Activated CD8-positive, alpha-beta T cell treated with anti-CD3 and anti-CD28 coated beads for 36 hours (primary cell): ENCODE measurements at regions of chr2 and their contacts with region 1.

Region 1: DNA sequence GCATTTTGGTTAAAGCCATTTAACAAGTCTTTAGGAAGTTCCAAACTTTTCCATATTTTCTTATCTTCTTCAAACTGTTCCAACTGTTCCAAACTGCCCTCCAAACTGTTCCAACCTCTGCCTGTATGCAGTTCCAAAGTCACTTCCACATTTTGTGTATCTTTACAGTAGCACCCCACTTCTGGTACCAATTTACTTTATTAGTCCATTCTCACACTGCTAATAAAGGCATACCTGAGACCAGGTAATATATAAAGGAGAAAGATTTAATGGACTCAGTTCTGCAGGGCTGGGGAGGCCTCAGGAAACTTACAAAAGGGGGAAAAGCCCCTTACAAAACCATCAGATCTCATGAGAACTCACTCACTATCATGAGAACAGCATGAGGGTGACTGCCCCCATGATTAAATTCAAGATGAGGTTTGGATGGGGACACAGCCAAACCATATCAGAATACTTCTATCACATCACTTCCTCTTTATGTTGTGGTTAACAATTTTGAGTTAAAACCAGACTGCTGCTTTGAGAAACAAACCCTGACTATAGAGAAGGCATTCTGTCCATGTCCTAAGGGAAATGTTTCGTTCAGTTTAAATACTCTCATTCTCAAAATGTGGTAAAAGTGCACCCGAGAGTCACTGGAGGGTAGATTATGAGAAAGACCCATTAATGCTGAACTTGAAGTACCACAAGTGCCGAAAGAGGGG is 11.0 kb downstream of the IL18R1 start:
- DNase-seq: peak; percentile 41
- ATAC-seq: peak; percentile 52
- H3K4me3 Mint-ChIP-seq: peak overlapping the region; percentile 51
- H3K27ac Mint-ChIP-seq: peak overlapping the region; percentile 96
- H3K4me1 Mint-ChIP-seq: peaks cover 88% of the 10 kb centered on the region
- H3K27me3 Mint-ChIP-seq: no peaks in the 10 kb centered on the region
- CTCF ChIP-seq: no peak

Region 2: GRCh38 chr2:102094917-102095316 is 271.6 kb before region 1 on chr2:
- CTCF ChIA-PET with region 1: no interaction called
- POLR2A ChIA-PET with region 1: no interaction called
- intact Hi-C with region 1: no loop called
- DNase-seq: peak; percentile 76
- ATAC-seq: peak; percentile 95
- H3K4me3 Mint-ChIP-seq: no peak overlapping the region
- H3K27ac Mint-ChIP-seq: no peak overlapping the region
- H3K4me1 Mint-ChIP-seq: peaks cover 4% of the 10 kb centered on the region
- H3K27me3 Mint-ChIP-seq: peaks cover 1% of the 10 kb centered on the region
- CTCF ChIP-seq: no peak

Region 3: DNA sequence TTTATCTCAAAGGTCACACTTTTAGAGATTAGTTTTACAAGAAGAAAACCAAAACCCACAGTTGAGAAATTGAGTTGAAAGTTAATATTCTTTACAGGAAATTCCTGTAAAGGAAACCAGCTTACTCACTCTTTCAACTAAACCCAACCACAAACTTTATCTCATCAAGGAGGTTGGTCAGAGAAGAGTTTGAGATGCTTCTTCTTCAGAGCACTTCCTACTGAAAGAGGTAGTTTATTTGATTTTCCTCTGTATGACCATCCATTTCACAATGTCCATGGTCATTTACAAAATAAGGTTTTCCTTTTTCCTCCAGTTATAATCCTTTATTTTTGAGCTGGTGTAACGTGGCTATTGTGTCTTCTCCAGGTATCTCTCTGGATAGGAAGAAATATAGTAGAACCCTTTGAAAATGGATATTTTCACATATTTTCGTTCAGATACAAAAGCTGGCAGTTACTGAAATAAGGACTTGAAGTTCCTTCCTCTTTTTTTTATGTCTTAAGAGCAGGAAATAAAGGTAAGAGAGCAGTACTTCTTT is 51.9 kb after region 1 on chr2:
- CTCF ChIA-PET with region 1: interaction called, 8 read pairs
- POLR2A ChIA-PET with region 1: interaction called, 5 read pairs
- intact Hi-C with region 1: loop called (anchors 1 kb)
- DNase-seq: no peak
- ATAC-seq: peak; percentile 67
- H3K4me3 Mint-ChIP-seq: peak overlapping the region; percentile 74
- H3K27ac Mint-ChIP-seq: peak overlapping the region; percentile 98
- H3K4me1 Mint-ChIP-seq: peaks cover 59% of the 10 kb centered on the region
- H3K27me3 Mint-ChIP-seq: no peaks in the 10 kb centered on the region
- CTCF ChIP-seq: no peak

Region 4: DNA sequence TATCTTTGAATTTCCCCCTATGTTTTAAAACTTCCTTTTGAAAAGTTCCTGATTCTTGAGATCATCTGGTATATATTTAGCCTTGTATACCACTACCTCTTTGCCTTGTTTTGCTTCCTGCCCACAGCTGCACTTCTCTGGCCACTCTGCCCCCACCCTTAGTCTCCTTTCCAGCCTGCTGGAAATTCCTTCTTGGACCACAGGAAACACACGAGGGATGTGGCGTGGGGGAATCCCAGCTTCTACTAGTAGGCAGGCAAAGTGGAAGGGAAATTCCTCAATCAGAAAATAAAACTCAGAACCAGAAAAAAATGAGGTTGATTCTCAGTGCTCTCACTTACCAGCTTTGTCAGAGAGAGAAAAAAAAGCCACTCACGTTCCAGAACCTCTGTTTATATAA is 69.8 kb after region 1 on chr2:
- CTCF ChIA-PET with region 1: no interaction called
- POLR2A ChIA-PET with region 1: interaction called, 4 read pairs
- intact Hi-C with region 1: loop called (anchors 2 kb)
- DNase-seq: peak; percentile 28
- ATAC-seq: no peak
- H3K4me3 Mint-ChIP-seq: peak overlapping the region; percentile 23
- H3K27ac Mint-ChIP-seq: peak overlapping the region; percentile 81
- H3K4me1 Mint-ChIP-seq: peaks cover 48% of the 10 kb centered on the region
- H3K27me3 Mint-ChIP-seq: no peaks in the 10 kb centered on the region
- CTCF ChIP-seq: no peak